Activated CD4-positive, alpha-beta T cell treated with anti-CD3 and anti-CD28 coated beads for 36 hours (primary cell): ENCODE measurements at regions of chr14 and their contacts with region 1.

Region 1: GRCh38 chr14:105065280-105066228 is at the start of gene GPR132:
- DNase-seq: peak; percentile 93
- ATAC-seq: peak; percentile 78
- H3K4me3 Mint-ChIP-seq: peak within 1 kb of the TSS; percentile 92
- H3K27ac Mint-ChIP-seq: peak within 1 kb of the TSS; percentile 96
- H3K4me1 Mint-ChIP-seq: peaks cover 74% of the 10 kb centered on the region
- H3K27me3 Mint-ChIP-seq: no peaks in the 10 kb centered on the region
- total RNA-seq, gene GPR132: 27.7 to 35.4 TPM

Region 2: GRCh38 chr14:104639889-104640548 is 425.5 kb before region 1 on chr14:
- CTCF ChIA-PET with region 1: no interaction called
- POLR2A ChIA-PET with region 1: no interaction called
- intact Hi-C with region 1: no loop called
- DNase-seq: peak; percentile 76
- ATAC-seq: peak; percentile 93
- H3K4me3 Mint-ChIP-seq: no peak overlapping the region
- H3K27ac Mint-ChIP-seq: no peak overlapping the region
- H3K4me1 Mint-ChIP-seq: peaks cover 5% of the 10 kb centered on the region
- H3K27me3 Mint-ChIP-seq: peaks cover 8% of the 10 kb centered on the region

Region 3: DNA sequence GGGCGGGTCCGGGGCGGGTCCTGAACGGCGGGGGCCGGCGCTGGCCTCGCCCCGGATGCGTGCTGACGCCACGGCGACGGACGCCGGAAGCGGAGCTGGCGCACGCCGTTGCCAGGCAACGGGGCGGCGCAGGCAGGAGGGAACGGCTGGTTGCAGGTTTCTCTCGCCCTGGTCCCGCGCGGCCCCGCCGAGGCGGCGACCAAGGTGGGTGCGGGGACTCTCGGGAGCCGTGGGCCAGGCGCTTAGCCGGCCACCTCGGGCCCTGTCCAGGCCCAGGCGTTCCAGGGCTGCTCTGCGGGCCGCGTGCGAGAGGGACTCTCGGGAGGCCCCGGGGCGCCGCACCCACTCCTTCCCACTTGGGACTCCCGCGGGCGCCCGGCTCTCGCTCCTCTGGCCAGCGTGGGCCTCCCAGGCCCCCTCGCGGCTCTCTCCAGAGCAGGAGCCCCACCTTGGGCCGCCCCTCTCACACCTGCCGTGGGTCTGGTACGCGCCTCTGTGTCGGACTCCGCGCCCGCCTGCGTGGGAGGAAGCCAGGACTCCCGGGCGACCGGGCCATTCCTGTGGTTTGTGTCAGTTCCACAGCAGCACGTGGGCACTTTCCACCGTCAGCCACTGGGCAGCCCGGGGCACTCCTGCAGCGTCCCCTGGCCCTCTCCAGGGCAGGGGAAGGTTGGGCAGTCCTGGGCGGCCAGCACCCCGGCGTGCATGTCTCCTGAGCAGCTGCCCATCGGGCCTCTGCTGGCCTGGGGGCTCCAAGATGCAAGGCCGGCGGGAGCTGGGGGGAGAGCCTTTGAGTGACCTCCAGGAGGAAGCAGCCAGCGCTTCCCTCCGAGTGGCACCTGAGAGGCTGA is 79.7 kb before region 1 on chr14 and contains the start of gene CLBA1:
- CTCF ChIA-PET with region 1: no interaction called
- POLR2A ChIA-PET with region 1: interaction called, 4 read pairs
- intact Hi-C with region 1: loop called in 1 of 2 experiments (anchors 1 kb)
- DNase-seq: peak; percentile 93
- ATAC-seq: peak; percentile 99
- H3K4me3 Mint-ChIP-seq: peak within 1 kb of the TSS; percentile 64
- H3K27ac Mint-ChIP-seq: peak within 1 kb of the TSS; percentile 47
- H3K4me1 Mint-ChIP-seq: peaks cover 5% of the 10 kb centered on the region
- H3K27me3 Mint-ChIP-seq: no peaks in the 10 kb centered on the region
- total RNA-seq, gene CLBA1: 1.1 to 1.9 TPM

Region 4: GRCh38 chr14:105026803-105027563 is 38.6 kb before region 1 on chr14:
- CTCF ChIA-PET with region 1: interaction called, 7 read pairs
- POLR2A ChIA-PET with region 1: interaction called, 5 read pairs
- intact Hi-C with region 1: loop called in 1 of 2 experiments (anchors 1 kb)
- DNase-seq: no peak
- ATAC-seq: no peak
- H3K4me3 Mint-ChIP-seq: no peak overlapping the region
- H3K27ac Mint-ChIP-seq: peak overlapping the region; percentile 11
- H3K4me1 Mint-ChIP-seq: peaks cover 43% of the 10 kb centered on the region
- H3K27me3 Mint-ChIP-seq: no peaks in the 10 kb centered on the region

Region 5: DNA sequence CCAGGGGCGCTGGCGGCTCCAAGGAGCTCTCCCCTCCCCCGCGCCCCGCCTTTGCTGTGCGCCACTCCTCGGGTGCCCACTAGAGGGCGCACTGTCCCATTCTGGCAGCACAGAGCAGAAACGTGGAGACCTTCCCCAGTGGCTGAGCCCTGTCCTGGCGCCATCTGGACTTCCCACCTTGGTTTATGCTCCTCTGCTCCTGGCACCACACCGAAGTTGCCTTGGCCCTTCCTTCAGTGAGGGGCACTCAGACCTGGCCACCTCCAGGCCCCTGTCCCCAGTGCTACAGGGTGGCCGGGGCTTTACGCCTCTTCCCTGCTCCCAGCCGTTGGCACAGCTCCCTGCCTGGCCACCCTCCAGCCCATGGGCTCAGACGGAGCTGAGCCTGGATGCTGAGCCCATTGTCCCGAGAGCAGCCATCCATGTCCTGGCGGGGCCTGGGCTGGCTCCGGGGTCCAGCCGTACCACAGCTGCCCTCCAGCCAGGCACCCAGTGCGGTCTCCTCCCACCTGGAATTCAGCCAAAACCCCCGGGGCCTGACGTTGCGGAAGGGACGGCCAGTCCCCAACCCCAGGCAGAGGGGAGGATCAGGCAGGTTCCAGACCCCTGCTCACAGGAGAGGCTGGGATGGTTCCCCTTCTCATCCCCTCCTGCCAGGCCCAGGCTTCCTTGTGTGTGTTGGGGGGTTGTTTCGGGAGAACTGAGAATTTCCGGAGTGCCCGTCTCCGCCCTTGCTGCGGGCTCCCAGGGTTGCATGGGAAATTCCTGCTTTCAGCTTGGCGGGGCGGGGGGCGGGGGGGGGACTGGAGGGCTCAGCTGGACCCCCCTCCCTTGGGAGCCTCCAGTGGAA is 415.6 kb after region 1 on chr14:
- CTCF ChIA-PET with region 1: no interaction called
- POLR2A ChIA-PET with region 1: no interaction called
- intact Hi-C with region 1: loop called in 1 of 2 experiments (anchors 10 kb)
- DNase-seq: peak; percentile 95
- ATAC-seq: peak; percentile 69
- H3K4me3 Mint-ChIP-seq: peak overlapping the region; percentile 62
- H3K27ac Mint-ChIP-seq: peak overlapping the region; percentile 87
- H3K4me1 Mint-ChIP-seq: peaks cover 48% of the 10 kb centered on the region
- H3K27me3 Mint-ChIP-seq: peaks cover 5% of the 10 kb centered on the region